Mammary epithelial cell (primary cell): ENCODE measurements at regions of chr2 and their contacts with region 1.

Region 1: DNA sequence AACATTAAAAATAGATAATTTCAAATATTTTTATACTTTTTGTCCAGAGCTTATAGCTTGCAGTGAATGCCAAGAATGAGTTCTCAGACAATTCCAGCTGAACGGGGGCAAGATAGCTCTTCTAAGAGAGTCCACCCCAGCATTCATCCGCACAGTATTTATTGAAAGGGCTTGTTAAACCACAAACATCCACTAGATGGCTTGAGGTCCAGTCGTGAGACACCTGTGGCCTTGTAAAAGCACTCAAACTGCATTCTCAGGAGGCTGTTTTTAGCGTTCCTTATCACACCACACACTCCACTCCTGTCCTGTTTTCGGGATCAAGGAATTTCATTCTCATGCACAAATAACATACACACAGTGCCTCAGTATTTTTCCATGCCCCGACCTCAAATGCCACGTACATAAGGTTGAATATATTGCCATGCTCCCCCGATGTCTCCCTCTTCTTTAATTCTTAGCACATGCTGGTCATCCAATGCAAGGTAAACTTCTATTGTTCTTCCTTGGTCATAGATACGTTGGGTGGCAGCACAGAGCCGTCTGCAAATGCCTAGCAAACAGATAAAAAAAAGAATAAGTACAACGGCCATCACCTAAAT is 47.4 kb downstream of the DNAJC10 start:
- DNase-seq: peak; percentile 16
- H3K4me3 ChIP-seq: no peak overlapping the region
- H3K27ac ChIP-seq: no peak overlapping the region
- H3K4me1 ChIP-seq: no peaks in the 10 kb centered on the region
- H3K27me3 ChIP-seq: no peaks in the 10 kb centered on the region
- CTCF ChIP-seq: peak; percentile 41 to 73

Region 2: GRCh38 chr2:182980115-182980514 is 216.7 kb after region 1 on chr2:
- CTCF ChIA-PET with region 1: no interaction called
- dilution Hi-C with region 1: no loop called
- in situ Hi-C with region 1: loop called (anchors 25 kb)
- intact Hi-C with region 1: loop called (anchors 1 kb)
- DNase-seq: peak; percentile 12
- H3K4me3 ChIP-seq: no peak overlapping the region
- H3K27ac ChIP-seq: no peak overlapping the region
- H3K4me1 ChIP-seq: no peaks in the 10 kb centered on the region
- H3K27me3 ChIP-seq: no peaks in the 10 kb centered on the region
- CTCF ChIP-seq: peak; percentile 30 to 52

Region 3: GRCh38 chr2:183093857-183094657 is 330.6 kb after region 1 on chr2:
- CTCF ChIA-PET with region 1: no interaction called
- dilution Hi-C with region 1: no loop called
- in situ Hi-C with region 1: no loop called
- intact Hi-C with region 1: loop called (anchors 10 kb)
- DNase-seq: peak; percentile 8
- H3K4me3 ChIP-seq: no peak overlapping the region
- H3K27ac ChIP-seq: no peak overlapping the region
- H3K4me1 ChIP-seq: no peaks in the 10 kb centered on the region
- H3K27me3 ChIP-seq: no peaks in the 10 kb centered on the region
- CTCF ChIP-seq: no peak